Natural killer cell (primary cell): ENCODE measurements at regions of chr4 and their contacts with region 1.

Region 1: GRCh38 chr4:15963001-15963451 is at the start of gene FGFBP2:
- DNase-seq: peak; percentile 67 to 83
- ATAC-seq: peak; percentile 51 to 72 (median 65)
- H3K4me3 ChIP-seq: peak within 1 kb of the TSS; percentile 61
- H3K4me3 Mint-ChIP-seq: peak within 1 kb of the TSS; percentile 89
- H3K27ac ChIP-seq: peak within 1 kb of the TSS; percentile 84
- H3K27ac Mint-ChIP-seq: peak within 1 kb of the TSS; percentile 94 to 95
- H3K4me1 ChIP-seq: peaks cover 42% of the 10 kb centered on the region
- H3K4me1 Mint-ChIP-seq: peaks cover 64 to 70% of the 10 kb centered on the region in 2 donors
- H3K27me3 ChIP-seq: no peaks in the 10 kb centered on the region
- H3K27me3 Mint-ChIP-seq: no peaks in the 10 kb centered on the region
- CTCF ChIP-seq: peak; percentile 43
- total RNA-seq, gene FGFBP2: 644 to 736 (median 713) TPM

Region 2: DNA sequence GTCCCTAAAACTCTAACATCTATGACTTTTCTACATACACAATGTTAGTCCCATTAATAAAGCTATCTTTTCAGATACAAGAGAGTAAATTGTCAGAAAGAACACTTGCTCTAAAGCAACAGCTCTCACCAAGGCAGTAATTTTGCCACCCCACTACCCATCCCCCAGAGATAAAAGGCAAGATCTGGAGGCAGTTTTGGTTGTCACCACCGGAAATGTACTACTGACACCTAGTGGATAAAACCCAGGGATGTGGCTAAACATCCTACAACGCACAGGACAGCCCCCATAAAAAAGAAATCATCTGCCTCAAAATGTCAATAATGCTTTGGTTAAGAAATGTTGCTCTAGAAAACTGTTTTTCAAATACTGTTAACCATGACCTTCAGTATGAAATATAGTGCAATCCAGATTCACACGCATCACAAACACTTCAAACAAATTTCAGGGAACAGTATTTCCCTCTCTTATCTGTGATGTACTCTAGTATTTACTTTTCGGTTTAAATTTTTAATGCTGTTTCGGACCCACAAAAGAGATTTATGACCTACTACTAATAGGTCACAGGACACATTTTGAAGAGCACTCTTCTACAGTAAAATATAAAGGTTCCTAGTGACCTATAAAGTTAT is 313.0 kb before region 1 on chr4:
- intact Hi-C with region 1: loop called (anchors 5 kb)
- DNase-seq: peak; percentile 48 to 88
- ATAC-seq: peak; percentile 79 to 90 (median 80)
- H3K4me3 ChIP-seq: no peak overlapping the region
- H3K4me3 Mint-ChIP-seq: peak overlapping the region; percentile 70
- H3K27ac ChIP-seq: peak overlapping the region; percentile 38
- H3K27ac Mint-ChIP-seq: peak overlapping the region; percentile 94 to 96
- H3K4me1 ChIP-seq: peaks cover 23% of the 10 kb centered on the region
- H3K4me1 Mint-ChIP-seq: peaks cover 56 to 68% of the 10 kb centered on the region in 2 donors
- H3K27me3 ChIP-seq: no peaks in the 10 kb centered on the region
- H3K27me3 Mint-ChIP-seq: no peaks in the 10 kb centered on the region
- CTCF ChIP-seq: peak; percentile 73

Region 3: GRCh38 chr4:15756361-15756861 is 206.6 kb before region 1 on chr4:
- intact Hi-C with region 1: loop called (anchors 1 kb)
- DNase-seq: peak; percentile 68 to 91
- ATAC-seq: peak; percentile 85 to 95 (median 91)
- H3K4me3 ChIP-seq: peak overlapping the region; percentile 11
- H3K4me3 Mint-ChIP-seq: peak overlapping the region; percentile 90
- H3K27ac ChIP-seq: peak overlapping the region; percentile 40
- H3K27ac Mint-ChIP-seq: peak overlapping the region; percentile 79 to 88
- H3K4me1 ChIP-seq: peaks cover 36% of the 10 kb centered on the region
- H3K4me1 Mint-ChIP-seq: peaks cover 48 to 49% of the 10 kb centered on the region in 2 donors
- H3K27me3 ChIP-seq: no peaks in the 10 kb centered on the region
- H3K27me3 Mint-ChIP-seq: peaks cover 0 to 4% of the 10 kb centered on the region in 2 donors
- CTCF ChIP-seq: peak; percentile 65

Region 4: GRCh38 chr4:15778289-15779241 is 184.5 kb before region 1 on chr4 and contains the start of gene CD38:
- intact Hi-C with region 1: loop called (anchors 2 kb)
- DNase-seq: peak; percentile 61 to 68
- ATAC-seq: peak; percentile 55 to 71 (median 70)
- H3K4me3 ChIP-seq: peak within 1 kb of the TSS; percentile 59
- H3K4me3 Mint-ChIP-seq: peak within 1 kb of the TSS; percentile 91
- H3K27ac ChIP-seq: peak within 1 kb of the TSS; percentile 49
- H3K27ac Mint-ChIP-seq: peak within 1 kb of the TSS; percentile 83 to 86
- H3K4me1 ChIP-seq: peaks cover 46% of the 10 kb centered on the region
- H3K4me1 Mint-ChIP-seq: peaks cover 71 to 78% of the 10 kb centered on the region in 2 donors
- H3K27me3 ChIP-seq: no peaks in the 10 kb centered on the region
- H3K27me3 Mint-ChIP-seq: no peaks in the 10 kb centered on the region
- CTCF ChIP-seq: no peak
- total RNA-seq, gene CD38: 91.8 to 124 (median 98.8) TPM